ENCODE measurements at regions of chr12 and their contacts with region 1.

Region 1: DNA sequence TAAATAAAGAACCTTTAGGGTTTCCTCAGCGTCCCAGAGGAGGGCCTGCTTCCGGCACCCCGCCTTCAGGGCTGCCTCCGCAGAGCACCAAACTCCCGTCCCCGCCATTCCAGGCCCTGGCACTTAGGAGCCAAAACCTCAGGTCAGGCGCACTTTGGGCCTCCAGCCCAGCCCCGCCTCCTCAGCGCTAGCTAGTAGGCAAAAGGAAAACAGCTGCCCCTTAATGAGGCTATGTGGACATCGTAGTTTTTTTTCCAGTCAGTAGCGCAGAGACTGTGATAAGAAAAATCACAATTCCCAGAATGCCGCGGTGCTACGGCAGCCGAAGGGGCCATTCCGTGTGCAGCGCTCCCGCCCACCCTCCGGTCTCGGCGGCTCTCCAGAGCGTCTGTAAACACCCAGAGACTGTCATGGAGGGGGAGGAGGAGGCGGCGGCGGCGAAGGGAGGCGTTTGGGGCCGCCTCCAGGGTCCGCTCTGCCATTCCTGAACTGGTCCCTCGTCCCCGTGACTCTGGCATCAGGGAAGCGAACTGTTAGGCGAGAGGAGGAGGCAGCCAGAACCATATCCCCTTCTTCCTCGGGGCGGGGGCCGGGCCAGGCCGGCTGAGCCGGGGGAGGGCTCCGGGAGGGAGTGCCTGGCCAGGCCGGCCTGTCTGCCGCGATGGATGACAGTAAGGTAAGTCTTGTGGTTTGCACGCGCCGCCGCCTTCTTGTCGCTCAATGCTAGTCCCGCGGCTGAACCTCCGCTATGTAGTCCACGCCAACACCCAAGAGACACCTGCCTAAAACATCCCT is at the start of gene CREBL2:
- DNase-seq: peak; percentile 79
- H3K4me3 Mint-ChIP-seq: peak within 1 kb of the TSS; percentile 94
- H3K27ac Mint-ChIP-seq: peak within 1 kb of the TSS; percentile 88
- H3K4me1 Mint-ChIP-seq: peaks cover 49% of the 10 kb centered on the region
- H3K27me3 Mint-ChIP-seq: no peaks in the 10 kb centered on the region
- total RNA-seq, gene CREBL2: 22.3 and 23.3 TPM in 2 replicates

Region 2: DNA sequence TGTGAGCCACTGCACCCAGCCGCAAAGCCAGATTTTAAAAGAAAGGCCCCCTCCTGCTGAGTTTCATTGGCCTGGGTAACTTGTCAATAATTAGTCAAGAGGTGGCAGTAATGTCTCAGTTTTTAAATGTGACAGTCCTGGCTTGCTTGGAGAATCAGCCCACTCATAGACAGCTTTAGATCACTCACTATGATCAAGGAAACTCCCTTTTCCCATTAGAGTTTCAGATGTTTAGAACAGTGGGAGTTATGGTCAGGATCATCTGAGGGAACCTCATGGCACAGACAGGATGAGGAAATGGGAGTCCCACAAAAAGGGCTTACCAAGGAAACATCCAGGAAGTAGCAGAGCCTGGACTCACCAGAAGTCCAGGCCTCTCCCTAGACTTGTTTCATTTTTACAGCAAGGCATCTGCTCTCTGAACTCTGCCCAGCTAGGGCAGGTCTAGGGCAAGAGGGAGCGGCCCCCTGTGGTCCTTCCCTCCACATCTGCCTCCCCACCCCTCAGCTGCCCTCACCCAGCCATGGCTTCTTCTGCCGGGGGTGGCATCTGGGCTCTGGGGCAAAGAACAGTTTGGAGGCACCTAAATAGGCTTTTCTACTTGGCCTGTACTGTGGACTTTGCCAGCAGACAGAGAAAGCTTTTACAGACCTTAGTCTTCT is 529.7 kb before region 1 on chr12:
- intact Hi-C with region 1: no loop called
- DNase-seq: no peak
- H3K4me3 Mint-ChIP-seq: no peak overlapping the region
- H3K27ac Mint-ChIP-seq: no peak overlapping the region
- H3K4me1 Mint-ChIP-seq: no peaks in the 10 kb centered on the region
- H3K27me3 Mint-ChIP-seq: peaks cover 6% of the 10 kb centered on the region

Region 3: DNA sequence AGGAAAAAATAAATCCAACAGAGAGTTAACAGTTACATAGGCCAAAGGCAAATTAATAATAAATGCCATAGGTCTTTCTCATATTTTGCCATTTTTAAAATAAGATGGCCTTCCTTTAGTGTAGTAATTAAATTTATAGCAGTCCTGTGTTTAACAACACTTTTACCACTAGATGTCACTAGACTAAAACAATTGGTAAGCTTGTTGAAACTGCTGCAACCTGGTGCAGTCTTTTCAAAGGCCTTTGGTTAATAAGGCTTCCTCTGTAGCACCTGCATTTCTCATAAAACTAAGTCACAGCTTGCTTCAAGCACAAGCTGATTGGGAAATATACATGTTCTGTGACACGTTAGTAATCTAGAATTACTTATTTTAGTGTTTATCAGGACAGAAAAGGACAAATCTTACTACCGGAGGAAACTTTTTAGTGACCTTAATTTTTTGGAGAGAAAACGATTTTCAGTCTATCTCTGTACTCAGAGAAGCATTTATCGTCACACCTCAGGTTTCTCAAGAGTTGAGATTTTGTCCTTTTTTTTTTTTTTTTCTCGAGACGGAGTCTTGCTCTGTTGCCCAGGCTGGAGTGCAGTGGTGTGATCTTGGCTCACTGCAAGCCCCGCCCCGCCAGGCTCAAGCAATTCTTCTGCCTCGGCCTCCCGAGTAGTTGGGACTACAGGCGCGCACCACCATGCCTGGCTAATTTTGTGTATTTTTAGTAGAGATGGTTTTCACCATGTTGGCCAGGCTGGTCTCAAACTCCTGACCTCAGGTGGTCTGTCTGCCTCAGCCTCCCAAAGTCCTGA is 234.9 kb before region 1 on chr12:
- intact Hi-C with region 1: loop called (anchors 1 kb)
- DNase-seq: no peak
- H3K4me3 Mint-ChIP-seq: no peak overlapping the region
- H3K27ac Mint-ChIP-seq: peak overlapping the region; percentile 59
- H3K4me1 Mint-ChIP-seq: peaks cover 34% of the 10 kb centered on the region
- H3K27me3 Mint-ChIP-seq: no peaks in the 10 kb centered on the region

Region 4: GRCh38 chr12:12513416-12514006 is 98.2 kb before region 1 on chr12:
- intact Hi-C with region 1: loop called (anchors 2 kb)
- DNase-seq: no peak
- H3K4me3 Mint-ChIP-seq: no peak overlapping the region
- H3K27ac Mint-ChIP-seq: no peak overlapping the region
- H3K4me1 Mint-ChIP-seq: peaks cover 22% of the 10 kb centered on the region
- H3K27me3 Mint-ChIP-seq: no peaks in the 10 kb centered on the region

Region 5: GRCh38 chr12:12645485-12645884 is 33.8 kb after region 1 on chr12:
- intact Hi-C with region 1: loop called (anchors 5 kb)
- DNase-seq: no peak
- H3K4me3 Mint-ChIP-seq: no peak overlapping the region
- H3K27ac Mint-ChIP-seq: peak overlapping the region; percentile 78
- H3K4me1 Mint-ChIP-seq: peaks cover 13% of the 10 kb centered on the region
- H3K27me3 Mint-ChIP-seq: no peaks in the 10 kb centered on the region

Region 6: GRCh38 chr12:12724661-12725545 is 113.2 kb after region 1 on chr12:
- intact Hi-C with region 1: loop called (anchors 5 kb)
- DNase-seq: peak; percentile 90
- H3K4me3 Mint-ChIP-seq: peak overlapping the region; percentile 88
- H3K27ac Mint-ChIP-seq: peak overlapping the region; percentile 96
- H3K4me1 Mint-ChIP-seq: peaks cover 42% of the 10 kb centered on the region
- H3K27me3 Mint-ChIP-seq: no peaks in the 10 kb centered on the region

Measured in activated T-helper 2 cell treated with anti-CD3 and anti-CD28 coated beads, Interferon-gamma antibody, Interleukin-2, Interleukin-4, amounts not matched to agents 10 μg/mL and 5 μg/mL and 100 μg/mL, durations not matched to agents 14 hours and 24 hours and 36 hours (primary cell).